ENCODE measurements at regions of chr3 and their contacts with region 1.

Region 1: GRCh38 chr3:48556793-48557626 is at the start of gene PFKFB4:
- DNase-seq: peak; percentile 99
- H3K4me3 ChIP-seq: peak within 1 kb of the TSS; percentile 42 to 54
- H3K27ac ChIP-seq: peak within 1 kb of the TSS; percentile 68 to 74
- H3K4me1 ChIP-seq: peaks cover 5% of the 10 kb centered on the region
- H3K27me3 ChIP-seq: no peaks in the 10 kb centered on the region
- CTCF ChIP-seq: peak in 2 of 4 experiments; percentile 45 to 47
- POLR2A ChIP-seq: peak; percentile 9
- total RNA-seq, gene PFKFB4: 9.9 to 89.0 TPM

Region 2: DNA sequence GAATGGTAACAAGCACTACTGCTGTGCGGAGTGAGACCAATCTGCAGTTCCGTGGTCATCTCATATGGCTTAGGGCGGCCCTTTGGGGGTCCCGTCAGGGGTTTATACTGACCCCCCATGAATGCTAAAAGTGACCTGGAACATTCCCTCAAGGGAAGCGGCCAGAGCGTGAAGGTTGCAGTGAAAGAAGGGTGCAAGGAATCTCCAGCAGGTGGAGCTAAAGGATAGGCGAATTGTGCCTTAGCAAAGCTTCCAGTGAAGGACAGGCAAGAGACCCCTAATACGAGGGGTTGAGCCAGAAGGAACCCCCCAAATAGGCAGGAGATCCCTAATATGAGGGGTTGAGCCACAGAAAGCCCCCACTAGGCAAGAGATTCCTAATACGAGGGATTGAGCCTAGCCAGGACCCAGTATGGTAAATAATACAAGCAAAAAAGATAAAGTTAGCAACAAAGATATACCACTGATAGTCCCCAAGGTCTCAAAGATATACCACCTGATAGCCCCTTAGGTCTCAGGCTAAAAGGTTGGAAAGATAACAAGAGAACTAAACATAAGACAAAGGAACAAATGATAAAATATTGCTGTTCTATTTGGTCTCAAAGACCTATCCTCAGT is 283.3 kb before region 1 on chr3:
- intact Hi-C with region 1: loop called (anchors 10 kb)
- DNase-seq: peak; percentile 55
- H3K4me3 ChIP-seq: no peak overlapping the region
- H3K27ac ChIP-seq: no peak overlapping the region
- H3K4me1 ChIP-seq: peaks cover 6% of the 10 kb centered on the region
- H3K27me3 ChIP-seq: no peaks in the 10 kb centered on the region
- CTCF ChIP-seq: peak; percentile 56 to 82 (median 74)
- POLR2A ChIP-seq: no peak

Region 3: GRCh38 chr3:48400824-48401433 is 156.1 kb before region 1 on chr3:
- intact Hi-C with region 1: loop called (anchors 5 kb)
- DNase-seq: peak; percentile 73
- H3K4me3 ChIP-seq: no peak overlapping the region
- H3K27ac ChIP-seq: peak overlapping the region; percentile 75 to 77
- H3K4me1 ChIP-seq: no peaks in the 10 kb centered on the region
- H3K27me3 ChIP-seq: no peaks in the 10 kb centered on the region
- CTCF ChIP-seq: peak; percentile 67 to 94 (median 86)
- POLR2A ChIP-seq: no peak

Region 4: GRCh38 chr3:48595526-48596121 is 38.6 kb after region 1 on chr3:
- intact Hi-C with region 1: loop called (anchors 5 kb)
- DNase-seq: peak; percentile 48
- H3K4me3 ChIP-seq: peak overlapping the region in 1 of 2 donors; percentile 30
- H3K27ac ChIP-seq: peak overlapping the region; percentile 79 to 84
- H3K4me1 ChIP-seq: peaks cover 26% of the 10 kb centered on the region
- H3K27me3 ChIP-seq: no peaks in the 10 kb centered on the region
- CTCF ChIP-seq: no peak
- POLR2A ChIP-seq: no peak

Region 5: GRCh38 chr3:48609088-48610005 is 52.3 kb after region 1 on chr3 and contains the start of gene UQCRC1:
- intact Hi-C with region 1: loop called (anchors 2 kb)
- DNase-seq: peak; percentile 89
- H3K4me3 ChIP-seq: peak within 1 kb of the TSS; percentile 88 to 91
- H3K27ac ChIP-seq: peak within 1 kb of the TSS; percentile 84 to 88
- H3K4me1 ChIP-seq: no peaks in the 10 kb centered on the region
- H3K27me3 ChIP-seq: no peaks in the 10 kb centered on the region
- CTCF ChIP-seq: peak; percentile 47 to 96 (median 88)
- POLR2A ChIP-seq: peak; percentile 90
- total RNA-seq, gene UQCRC1: 239 to 251 TPM

Region 6: DNA sequence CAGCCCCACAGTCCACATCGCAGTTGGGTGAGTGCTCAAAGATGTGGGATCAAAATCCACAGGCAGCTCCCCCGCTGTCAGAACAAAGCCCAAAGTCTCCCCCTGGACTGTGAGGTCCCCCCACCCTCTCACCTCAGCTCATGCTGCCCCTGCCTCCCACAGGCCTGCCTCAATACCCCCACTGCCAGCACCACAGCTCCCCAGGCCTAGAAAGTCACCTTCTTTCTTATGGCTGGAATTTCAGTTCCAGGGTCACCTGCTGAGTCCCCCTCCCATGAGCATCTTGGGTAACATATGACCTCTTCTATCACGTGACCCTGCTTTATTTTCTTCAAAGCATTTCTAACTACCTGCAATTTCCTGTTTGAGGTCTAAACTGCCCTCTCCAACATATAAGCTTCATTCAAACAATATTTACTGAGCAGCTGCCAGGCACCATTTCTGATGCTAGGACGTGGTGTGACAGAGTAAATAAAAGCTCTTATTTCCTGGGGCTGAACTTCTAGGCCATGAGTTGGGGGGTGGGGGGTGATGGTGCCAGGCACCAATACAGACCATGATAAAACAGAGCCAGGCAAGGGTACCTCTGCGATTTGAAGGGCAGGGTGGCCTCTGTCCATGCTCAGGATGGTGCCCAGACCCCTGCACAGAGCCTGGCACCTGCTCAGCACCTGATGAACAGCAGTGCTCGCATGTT is 67.0 kb after region 1 on chr3:
- intact Hi-C with region 1: no loop called
- DNase-seq: peak; percentile 48
- H3K4me3 ChIP-seq: no peak overlapping the region
- H3K27ac ChIP-seq: peak overlapping the region in 1 of 2 donors; percentile 46
- H3K4me1 ChIP-seq: no peaks in the 10 kb centered on the region
- H3K27me3 ChIP-seq: no peaks in the 10 kb centered on the region
- CTCF ChIP-seq: no peak
- POLR2A ChIP-seq: no peak

Region 7: GRCh38 chr3:48685602-48686511 is 128.8 kb after region 1 on chr3 and contains the start of gene NCKIPSD:
- intact Hi-C with region 1: loop called (anchors 5 kb)
- DNase-seq: peak; percentile 86
- H3K4me3 ChIP-seq: peak within 1 kb of the TSS; percentile 89 to 95
- H3K27ac ChIP-seq: peak within 1 kb of the TSS; percentile 90 to 91
- H3K4me1 ChIP-seq: peaks cover 3% of the 10 kb centered on the region
- H3K27me3 ChIP-seq: no peaks in the 10 kb centered on the region
- CTCF ChIP-seq: peak; percentile 83 to 93 (median 88)
- POLR2A ChIP-seq: peak; percentile 81
- total RNA-seq, gene NCKIPSD: 32.9 to 83.3 TPM